Colonic mucosa (tissue), 4 donors: ENCODE measurements at regions of chr1 and their contacts with region 1.

Region 1: GRCh38 chr1:43659212-43660166 is 9.5 kb downstream of the KDM4A start:
- DNase-seq: peak; percentile 45
- H3K4me3 ChIP-seq: no peak overlapping the region
- H3K27ac ChIP-seq: no peak overlapping the region
- H3K4me1 ChIP-seq: no peaks in the 10 kb centered on the region
- H3K27me3 ChIP-seq: no peaks in the 10 kb centered on the region
- CTCF ChIP-seq: no peak

Region 2: DNA sequence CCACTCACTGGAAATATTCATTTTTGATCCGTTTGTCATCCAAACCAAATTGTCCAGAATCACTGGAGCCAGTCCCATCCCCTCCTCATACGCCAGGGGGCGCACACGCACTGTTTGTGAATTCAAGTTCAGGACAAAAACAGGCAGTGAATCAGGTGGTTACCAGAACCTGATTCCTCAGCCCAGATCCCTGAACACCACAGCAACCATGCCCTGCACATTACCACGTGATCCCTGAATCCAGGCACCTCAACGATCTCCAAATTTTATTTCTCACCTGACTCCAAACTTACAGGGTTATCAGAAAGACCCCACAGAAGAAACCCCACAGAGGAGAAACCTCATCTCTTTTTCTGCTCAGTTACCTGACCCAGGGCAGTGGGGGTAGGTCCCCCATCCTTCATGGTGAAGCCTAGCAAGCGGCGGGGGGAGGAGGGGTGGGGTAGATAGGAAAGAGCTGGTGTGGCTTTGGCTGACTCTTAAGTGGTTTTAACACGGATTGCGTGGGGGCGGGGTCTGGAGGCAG is 130.2 kb before region 1 on chr1:
- intact Hi-C with region 1: loop called (anchors 2 kb)
- DNase-seq: peak; percentile 93
- H3K4me3 ChIP-seq: no peak overlapping the region
- H3K27ac ChIP-seq: no peak overlapping the region
- H3K4me1 ChIP-seq: peaks cover 3% of the 10 kb centered on the region
- H3K27me3 ChIP-seq: no peaks in the 10 kb centered on the region
- CTCF ChIP-seq: peak; percentile 98

Region 3: DNA sequence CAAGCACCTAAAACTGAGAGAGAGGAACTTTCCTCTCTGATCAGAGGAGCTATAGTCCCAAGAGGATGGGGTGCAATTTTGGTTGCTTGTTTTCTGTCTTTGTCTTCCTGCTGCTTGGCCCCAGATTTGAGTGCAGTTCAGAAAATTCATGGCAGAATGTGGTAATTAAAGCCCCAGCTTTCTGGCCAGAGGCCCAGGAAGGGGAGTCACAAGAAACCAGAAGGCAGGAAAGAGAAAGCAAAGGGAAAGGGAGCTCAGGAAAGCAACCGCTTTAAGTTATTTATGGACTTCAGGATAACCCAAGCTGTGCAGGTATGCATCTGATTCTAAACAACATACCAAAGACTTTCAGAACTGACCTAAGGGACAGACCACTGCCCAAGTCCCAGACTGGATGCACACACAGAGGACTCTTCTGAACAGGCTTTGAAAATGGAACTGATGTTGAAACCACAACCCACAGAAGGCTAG is 136.7 kb after region 1 on chr1:
- intact Hi-C with region 1: no loop called
- DNase-seq: no peak
- H3K4me3 ChIP-seq: no peak overlapping the region
- H3K27ac ChIP-seq: no peak overlapping the region
- H3K4me1 ChIP-seq: no peaks in the 10 kb centered on the region
- H3K27me3 ChIP-seq: no peaks in the 10 kb centered on the region
- CTCF ChIP-seq: no peak